ENCODE measurements at regions of chr6 and their contacts with region 1.

Region 1: DNA sequence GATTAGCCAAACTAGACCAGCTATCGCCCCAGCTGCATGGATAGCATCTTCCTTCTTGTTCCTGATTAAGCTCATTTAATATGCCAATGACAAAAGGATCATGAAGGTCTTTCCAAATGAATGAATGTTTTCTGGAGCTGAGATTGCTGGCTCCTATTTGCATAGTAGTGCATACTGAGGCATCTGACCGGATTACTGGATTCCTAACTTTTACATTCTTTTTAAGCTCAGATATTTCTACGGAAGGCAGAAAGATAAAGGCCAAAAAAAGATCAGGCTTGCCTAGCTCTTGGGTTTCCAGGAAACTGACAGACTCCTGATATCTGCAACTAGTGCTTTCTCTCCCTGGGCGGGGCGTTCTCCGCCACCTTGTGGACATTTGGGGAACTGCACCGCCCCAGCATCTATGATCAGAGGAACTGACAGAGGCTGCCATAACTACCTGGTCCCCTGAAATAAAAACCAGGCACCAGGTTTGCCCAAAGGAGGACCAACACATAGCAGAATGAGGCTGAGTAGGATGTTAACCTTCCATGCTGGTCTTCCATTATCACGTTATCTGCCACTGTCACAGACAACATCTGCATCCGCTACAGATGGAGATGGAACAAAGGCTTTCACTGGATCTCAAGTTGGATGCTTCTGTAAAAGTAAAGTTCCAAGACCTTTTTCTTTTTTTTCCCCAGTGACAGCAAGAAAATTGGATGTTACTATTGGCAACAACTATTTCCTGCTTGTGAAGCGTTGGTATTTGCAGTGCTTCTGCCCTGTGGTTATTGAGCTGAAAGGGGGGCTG is 33.2 kb downstream of the NT5E start:
- DNase-seq: peak; percentile 87
- ATAC-seq: peak; percentile 97
- H3K4me3 ChIP-seq: no peak overlapping the region
- H3K27ac ChIP-seq: no peak overlapping the region
- H3K4me1 ChIP-seq: peaks cover 5% of the 10 kb centered on the region
- H3K27me3 ChIP-seq: no peaks in the 10 kb centered on the region
- CTCF ChIP-seq: peak; percentile 100

Region 2: GRCh38 chr6:85354761-85355618 is 128.1 kb before region 1 on chr6:
- intact Hi-C with region 1: loop called (anchors 5 kb)
- DNase-seq: peak; percentile 73
- ATAC-seq: peak; percentile 97
- H3K4me3 ChIP-seq: no peak overlapping the region
- H3K27ac ChIP-seq: no peak overlapping the region
- H3K4me1 ChIP-seq: no peaks in the 10 kb centered on the region
- H3K27me3 ChIP-seq: no peaks in the 10 kb centered on the region
- CTCF ChIP-seq: peak; percentile 98